ENCODE measurements at regions of chr11 and their contacts with region 1.

Region 1: DNA sequence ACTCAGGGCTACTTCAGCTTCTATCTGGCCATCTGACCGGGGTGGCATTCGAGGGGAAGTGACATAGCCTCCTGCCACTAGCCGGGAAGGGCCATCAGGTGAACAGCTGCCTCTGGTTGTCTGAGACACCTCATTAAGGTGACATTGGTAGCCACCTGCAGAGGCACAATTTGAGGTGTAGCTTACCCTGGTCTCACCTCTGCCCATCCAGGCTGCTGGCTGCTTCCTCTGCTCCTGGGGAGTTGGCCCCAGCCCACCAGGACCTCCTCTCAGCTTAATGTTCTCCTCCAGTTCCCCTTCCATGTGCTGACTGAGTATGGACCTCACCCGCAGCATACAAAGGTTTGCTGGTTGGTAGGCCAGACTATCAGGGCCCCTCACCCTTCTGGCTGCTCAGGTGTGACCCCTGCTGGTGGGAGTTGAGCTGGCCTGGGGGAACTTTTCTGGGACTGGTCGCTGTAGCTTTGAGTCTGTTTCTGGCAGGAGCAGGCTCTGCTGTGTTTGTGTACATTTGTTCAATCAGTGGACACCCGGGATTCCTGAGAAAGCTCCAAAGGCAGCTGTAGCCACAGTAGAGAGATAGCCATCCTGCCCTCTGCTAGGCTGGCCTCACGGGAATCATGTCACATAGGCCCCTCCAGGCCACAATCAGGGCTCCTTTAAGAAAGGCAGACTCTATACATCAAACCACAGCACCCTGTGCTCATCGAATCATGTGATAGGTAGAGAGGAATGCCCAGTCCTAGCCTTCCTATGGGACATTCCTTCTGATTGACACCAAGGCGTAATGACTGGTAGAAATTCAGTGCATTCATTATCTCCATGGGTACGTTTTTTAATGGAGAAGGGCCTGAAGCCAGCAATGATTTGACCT is 295.1 kb upstream of the PLET1 start:
- DNase-seq: peak; percentile 55
- CTCF ChIP-seq: peak; percentile 54

Region 2: GRCh38 chr11:112289588-112290492 is 265.9 kb before region 1 on chr11:
- CTCF ChIA-PET with region 1: interaction called, 11 read pairs
- POLR2A ChIA-PET with region 1: no interaction called
- DNase-seq: peak; percentile 88
- CTCF ChIP-seq: peak; percentile 90

Region 3: DNA sequence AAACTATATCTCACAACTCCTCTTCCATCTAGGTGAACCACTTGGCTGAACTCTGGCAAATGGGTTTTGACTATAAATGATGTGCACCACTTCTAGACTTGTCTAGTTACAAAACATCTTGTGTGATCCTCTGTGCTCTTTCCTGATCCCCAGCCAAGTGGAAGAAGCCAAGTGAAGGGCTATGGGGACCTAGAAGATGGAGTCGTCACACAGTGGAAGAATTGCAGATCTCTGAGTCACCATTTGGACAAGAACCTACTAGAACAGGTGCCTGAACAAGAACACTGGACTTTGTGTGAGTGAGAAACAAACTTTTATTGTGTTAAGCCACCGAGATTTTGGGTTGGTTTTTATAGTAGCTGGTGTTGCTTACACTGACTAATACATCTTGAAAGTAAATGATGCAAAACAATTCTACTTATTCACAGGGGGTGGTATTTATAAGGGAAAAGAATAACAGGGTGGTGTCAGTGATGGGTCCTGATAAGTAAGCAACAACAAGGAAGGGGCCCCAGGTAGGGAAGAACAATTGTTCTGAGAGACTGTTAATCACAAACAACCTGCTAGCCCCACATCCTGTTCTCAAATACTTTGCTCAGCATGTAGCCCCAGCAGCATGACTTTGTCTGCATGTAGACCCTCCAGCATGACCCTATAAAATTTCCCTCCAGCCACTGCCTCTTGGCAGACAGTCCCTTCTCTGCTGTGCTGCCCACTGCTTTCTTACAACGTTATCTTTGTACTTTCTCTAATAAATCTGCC is 14.4 kb before region 1 on chr11:
- CTCF ChIA-PET with region 1: interaction called, 16 read pairs
- POLR2A ChIA-PET with region 1: no interaction called
- DNase-seq: no peak
- CTCF ChIP-seq: no peak